ENCODE measurements at regions of chr9 and their contacts with region 1.

Region 1: DNA sequence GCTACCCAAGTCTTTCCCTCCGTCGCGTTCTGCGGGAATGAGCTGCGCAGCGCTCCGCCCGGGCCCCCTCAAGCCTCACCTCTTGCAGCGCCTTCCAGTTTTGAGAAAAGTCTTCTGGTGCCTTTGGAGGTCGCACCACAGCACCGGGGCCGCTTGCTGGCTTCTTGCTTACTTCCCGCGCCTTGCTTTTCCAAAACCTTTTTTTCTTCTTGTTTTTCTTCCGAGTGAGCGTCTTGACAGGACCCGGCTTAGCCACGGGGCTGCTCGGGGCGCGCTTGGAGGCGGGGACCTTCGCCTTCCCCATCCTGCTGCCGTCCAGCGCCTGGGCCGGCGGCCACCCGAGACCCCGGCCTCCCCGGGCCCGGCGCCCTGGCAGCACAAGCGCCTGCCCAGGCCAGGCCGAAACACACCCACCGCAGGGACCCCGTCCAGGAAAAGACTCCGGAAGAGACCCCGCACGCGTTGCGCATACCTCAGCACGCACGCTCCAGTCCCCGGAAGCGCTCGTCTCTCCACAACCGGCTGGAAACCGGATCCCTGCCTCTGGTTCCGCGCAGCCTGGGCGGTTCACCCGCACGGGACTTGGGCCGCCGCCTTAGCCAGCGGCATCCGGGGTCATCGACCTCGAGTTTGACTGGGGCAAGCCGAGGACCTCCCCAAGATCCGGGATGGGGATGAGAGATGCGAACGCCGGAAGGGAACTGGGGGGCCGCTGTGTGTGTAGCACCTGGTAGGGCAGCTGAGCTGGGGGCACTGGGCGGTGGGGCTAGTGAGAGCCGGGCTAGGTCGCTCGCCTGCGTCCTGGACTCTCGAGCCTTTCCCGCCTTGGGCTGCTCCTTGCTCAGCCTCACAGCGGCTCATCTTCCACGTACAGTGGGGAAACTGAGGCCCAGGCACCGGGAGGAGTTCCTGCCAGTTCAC is at the start of gene REXO4:
- DNase-seq: peak; percentile 95
- H3K4me3 ChIP-seq: peak within 1 kb of the TSS; percentile 88
- H3K27ac ChIP-seq: peak within 1 kb of the TSS; percentile 65
- H3K4me1 ChIP-seq: peaks cover 50% of the 10 kb centered on the region
- CTCF ChIP-seq: no peak
- total RNA-seq, gene REXO4: 33.6 and 35.7 TPM in 2 replicates

Region 2: GRCh38 chr9:133347985-133348717 is 69.7 kb before region 1 on chr9 and contains the starts of genes MED22 and RPL7A:
- CTCF ChIA-PET with region 1: no interaction called
- POLR2A ChIA-PET with region 1: no interaction called
- intact Hi-C with region 1: loop called (anchors 5 kb)
- DNase-seq: peak; percentile 96
- H3K4me3 ChIP-seq: peak within 1 kb of the TSS; percentile 99
- H3K27ac ChIP-seq: peak within 1 kb of the TSS; percentile 87
- H3K4me1 ChIP-seq: peaks cover 35% of the 10 kb centered on the region
- CTCF ChIP-seq: no peak
- total RNA-seq, gene MED22: 39.6 and 62.1 TPM in 2 replicates
- total RNA-seq, gene RPL7A: 2,961 and 2,981 TPM in 2 replicates

Region 3: DNA sequence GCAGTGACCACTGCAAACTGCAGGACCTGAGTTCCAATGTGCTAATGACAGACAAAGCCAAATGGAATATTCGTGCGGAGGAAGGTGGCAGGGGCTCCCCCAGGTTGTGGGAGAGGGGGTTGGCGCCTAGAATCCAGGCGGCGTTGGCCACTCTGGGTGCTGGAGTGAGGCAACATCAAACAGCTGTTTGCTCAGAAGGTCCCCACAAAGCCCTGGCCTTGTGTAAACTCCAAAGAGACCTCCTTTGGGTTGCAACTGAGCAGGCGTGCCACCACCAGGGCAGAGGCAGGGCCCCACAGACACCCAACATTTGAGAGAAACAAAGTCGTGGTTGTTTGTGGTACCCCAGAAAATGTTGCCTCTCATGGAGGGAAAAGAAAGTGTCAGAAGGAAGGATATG is 27.1 kb before region 1 on chr9:
- CTCF ChIA-PET with region 1: interaction called, 11 read pairs
- POLR2A ChIA-PET with region 1: no interaction called
- intact Hi-C with region 1: no loop called
- DNase-seq: no peak
- H3K4me3 ChIP-seq: no peak overlapping the region
- H3K27ac ChIP-seq: no peak overlapping the region
- H3K4me1 ChIP-seq: no peaks in the 10 kb centered on the region
- CTCF ChIP-seq: no peak

Region 4: DNA sequence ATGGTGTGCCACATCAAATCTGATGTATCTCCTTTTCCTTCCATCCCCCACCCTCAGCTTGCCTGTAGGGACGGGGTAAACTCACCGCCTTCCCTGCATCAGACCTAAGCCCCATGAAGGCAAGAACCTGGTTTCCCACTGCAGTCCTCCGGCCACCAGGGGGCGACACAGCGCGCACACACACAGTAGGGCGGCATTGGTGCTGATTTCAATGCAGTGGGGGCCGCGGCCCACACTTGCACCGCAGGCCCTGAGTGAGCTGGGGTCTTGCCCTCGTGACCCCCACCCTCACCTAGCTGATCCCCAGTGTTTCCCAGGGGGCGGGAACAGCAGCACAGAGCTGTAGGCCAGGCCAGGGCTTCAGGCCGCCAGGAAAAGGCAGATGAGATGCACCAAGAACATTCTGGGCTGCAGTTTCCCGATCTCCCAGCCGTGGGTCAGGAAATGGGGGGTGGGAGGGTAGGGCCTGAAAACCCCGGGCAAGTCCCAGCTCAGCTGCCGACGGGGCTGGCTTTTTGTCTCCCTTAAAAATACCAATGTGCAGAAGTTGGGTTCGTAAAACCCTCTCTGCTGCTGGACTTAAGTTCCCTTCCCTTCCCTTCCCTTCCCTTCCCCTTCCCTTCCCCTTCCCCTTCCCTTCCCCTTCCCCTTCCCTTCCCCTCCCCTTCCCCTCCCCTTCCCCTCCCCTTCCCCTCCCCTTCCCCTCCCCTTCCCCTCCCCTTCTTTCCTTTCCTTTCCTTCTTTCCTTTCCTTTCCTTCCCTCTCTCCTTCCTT is 171.8 kb after region 1 on chr9:
- CTCF ChIA-PET with region 1: no interaction called
- POLR2A ChIA-PET with region 1: no interaction called
- intact Hi-C with region 1: no loop called
- DNase-seq: peak; percentile 66
- H3K4me3 ChIP-seq: no peak overlapping the region
- H3K27ac ChIP-seq: no peak overlapping the region
- H3K4me1 ChIP-seq: peaks cover 26% of the 10 kb centered on the region
- CTCF ChIP-seq: peak; percentile 93

Measured in OCI-LY7 (cell line).